ENCODE measurements at regions of chr10 and their contacts with region 1.

Region 1: GRCh38 chr10:70903262-70903921 is 15.0 kb upstream of the PCBD1 start:
- DNase-seq: peak in 1 of 2 experiments; percentile 93
- H3K4me3 ChIP-seq: no peak overlapping the region
- H3K27ac ChIP-seq: no peak overlapping the region
- H3K4me1 ChIP-seq: no peaks in the 10 kb centered on the region; a peak in 1 of 7 replicates
- H3K27me3 ChIP-seq: no peaks in the 10 kb centered on the region
- CTCF ChIP-seq: peak; percentile 92 to 99 (median 97)
- EP300 ChIP-seq: no peak
- POLR2A ChIP-seq: no peak
- RAD21 ChIP-seq: peak; percentile 96 to 99

Region 2: GRCh38 chr10:70699659-70700174 is 203.7 kb before region 1 on chr10:
- CTCF ChIA-PET with region 1: no interaction called
- POLR2A ChIA-PET with region 1: no interaction called
- DNase-seq: no peak
- H3K4me3 ChIP-seq: no peak overlapping the region
- H3K27ac ChIP-seq: no peak overlapping the region
- H3K4me1 ChIP-seq: peaks cover 0 to 4% (median 0%) of the 10 kb centered on the region in 4 experiments; a peak in 1 of 7 replicates
- H3K27me3 ChIP-seq: no peaks in the 10 kb centered on the region
- CTCF ChIP-seq: no peak
- EP300 ChIP-seq: no peak
- POLR2A ChIP-seq: no peak
- RAD21 ChIP-seq: no peak

Region 3: GRCh38 chr10:70742537-70743429 is 160.6 kb before region 1 on chr10:
- CTCF ChIA-PET with region 1: no interaction called
- POLR2A ChIA-PET with region 1: no interaction called
- DNase-seq: no peak
- H3K4me3 ChIP-seq: no peak overlapping the region
- H3K27ac ChIP-seq: no peak overlapping the region
- H3K4me1 ChIP-seq: peaks cover 0 to 4% (median 0%) of the 10 kb centered on the region in 4 experiments; a peak in 1 of 7 replicates
- H3K27me3 ChIP-seq: no peaks in the 10 kb centered on the region
- CTCF ChIP-seq: no peak
- EP300 ChIP-seq: no peak
- POLR2A ChIP-seq: no peak
- RAD21 ChIP-seq: no peak

Region 4: DNA sequence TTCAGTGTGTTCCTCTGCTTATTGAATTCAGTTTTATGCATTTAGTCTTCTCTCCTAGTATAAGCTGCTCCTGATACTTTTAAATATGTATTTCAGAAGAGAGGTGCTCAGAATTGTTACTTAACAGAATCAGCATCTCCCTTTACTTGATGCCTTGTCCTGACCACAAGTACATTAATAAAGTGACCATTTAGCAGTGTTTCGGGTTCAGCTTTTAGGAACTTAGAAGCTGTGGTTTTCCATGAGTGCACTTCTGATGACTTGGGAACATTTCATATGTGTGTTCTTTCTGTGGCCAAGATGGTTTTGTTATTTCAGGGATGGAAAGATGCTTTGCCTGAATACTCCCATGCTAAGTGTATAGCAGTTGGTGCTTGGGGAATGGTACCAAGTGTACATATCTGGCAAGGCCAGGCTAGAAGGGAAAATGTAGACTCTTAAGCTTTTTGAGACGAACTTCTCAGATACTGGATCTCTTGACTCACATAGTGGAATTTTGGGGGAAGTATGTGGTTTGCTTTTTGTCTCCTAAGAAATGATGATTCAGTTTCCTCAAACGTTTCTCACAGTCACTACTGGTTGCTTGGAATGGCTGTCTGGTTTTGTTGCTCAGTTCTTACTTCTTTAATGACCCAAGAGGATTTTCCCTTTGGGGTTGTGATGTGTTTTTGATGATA is 70.4 kb before region 1 on chr10:
- CTCF ChIA-PET with region 1: no interaction called
- POLR2A ChIA-PET with region 1: no interaction called
- DNase-seq: no peak
- H3K4me3 ChIP-seq: no peak overlapping the region
- H3K27ac ChIP-seq: no peak overlapping the region
- H3K4me1 ChIP-seq: no peaks in the 10 kb centered on the region
- H3K27me3 ChIP-seq: no peaks in the 10 kb centered on the region
- CTCF ChIP-seq: no peak
- EP300 ChIP-seq: no peak
- POLR2A ChIP-seq: no peak
- RAD21 ChIP-seq: no peak

Region 5: GRCh38 chr10:70887804-70888800 is 15.3 kb before region 1 on chr10 and contains the start of gene PCBD1:
- CTCF ChIA-PET with region 1: interaction called, 24 read pairs
- POLR2A ChIA-PET with region 1: interaction called, 4 read pairs
- DNase-seq: peak in 1 of 2 experiments; percentile 81
- H3K4me3 ChIP-seq: peak within 1 kb of the TSS; percentile 55 to 72 (median 64)
- H3K27ac ChIP-seq: no peak within 1 kb of the TSS
- H3K4me1 ChIP-seq: peaks cover 7 to 22% (median 18%) of the 10 kb centered on the region in 4 experiments; a peak in 6 of 7 replicates
- H3K27me3 ChIP-seq: no peaks in the 10 kb centered on the region; a peak in 1 of 7 replicates
- CTCF ChIP-seq: no peak
- EP300 ChIP-seq: no peak
- POLR2A ChIP-seq: no peak
- RAD21 ChIP-seq: no peak
- total RNA-seq, gene PCBD1: 46.5 and 46.9 TPM in 2 replicates

Region 6: GRCh38 chr10:70956029-70956759 is 52.8 kb after region 1 on chr10:
- CTCF ChIA-PET with region 1: interaction called, 10 read pairs
- POLR2A ChIA-PET with region 1: no interaction called
- DNase-seq: no peak
- H3K4me3 ChIP-seq: no peak overlapping the region
- H3K27ac ChIP-seq: no peak overlapping the region
- H3K4me1 ChIP-seq: no peaks in the 10 kb centered on the region
- H3K27me3 ChIP-seq: no peaks in the 10 kb centered on the region; a peak in 1 of 7 replicates
- CTCF ChIP-seq: peak; percentile 59 to 82 (median 74)
- EP300 ChIP-seq: no peak
- POLR2A ChIP-seq: no peak
- RAD21 ChIP-seq: peak; percentile 69 to 77

Region 7: GRCh38 chr10:71033396-71033980 is 130.1 kb after region 1 on chr10:
- CTCF ChIA-PET with region 1: interaction called, 17 read pairs
- POLR2A ChIA-PET with region 1: no interaction called
- DNase-seq: no peak
- H3K4me3 ChIP-seq: no peak overlapping the region
- H3K27ac ChIP-seq: no peak overlapping the region
- H3K4me1 ChIP-seq: peaks cover 0 to 2% (median 0%) of the 10 kb centered on the region in 4 experiments; a peak in 1 of 7 replicates
- H3K27me3 ChIP-seq: no peaks in the 10 kb centered on the region; a peak in 1 of 7 replicates
- CTCF ChIP-seq: peak; percentile 28 to 61 (median 33)
- EP300 ChIP-seq: no peak
- POLR2A ChIP-seq: no peak
- RAD21 ChIP-seq: peak in 1 of 2 experiments; percentile 42; a peak in 2 of 4 replicates

Region 8: DNA sequence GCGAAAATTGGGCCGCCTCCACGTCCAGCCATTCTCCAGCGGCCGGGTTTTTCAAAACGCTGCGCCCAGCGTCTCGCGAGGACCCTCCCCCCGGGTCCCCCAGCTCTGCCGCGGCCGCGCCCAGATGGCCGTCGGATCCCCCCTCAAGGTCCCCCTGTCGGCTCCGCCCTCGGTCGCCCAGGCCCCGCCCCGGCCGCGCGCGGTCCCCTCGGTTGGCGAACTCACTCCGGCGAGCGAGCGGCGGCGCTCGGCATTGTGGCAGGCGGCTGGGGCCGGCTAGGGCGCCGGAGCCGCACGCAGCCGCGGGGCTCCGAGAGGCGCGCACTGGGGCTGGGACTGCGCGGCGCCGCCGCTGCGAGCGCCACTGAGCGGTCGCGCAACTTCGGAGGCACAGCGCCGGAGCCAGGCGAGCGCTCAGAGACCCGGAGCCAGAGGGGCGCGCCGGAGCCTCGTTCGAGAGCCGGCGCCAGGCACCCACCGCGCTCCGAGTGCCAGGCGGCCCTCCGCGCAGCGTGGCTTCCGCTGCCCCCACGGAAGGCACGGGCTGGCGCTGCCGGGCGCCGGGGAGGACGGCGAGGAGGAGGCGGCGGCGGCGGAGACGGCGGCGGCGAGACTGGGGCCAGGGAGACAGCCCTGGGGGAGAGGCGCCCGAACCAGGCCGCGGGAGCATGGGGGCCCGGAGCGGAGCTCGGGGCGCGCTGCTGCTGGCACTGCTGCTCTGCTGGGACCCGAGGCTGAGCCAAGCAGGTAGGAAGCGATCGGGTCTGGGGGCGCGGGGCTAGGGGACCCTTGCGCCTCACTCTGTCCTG is 309.1 kb after region 1 on chr10 and contains the start of gene UNC5B:
- CTCF ChIA-PET with region 1: interaction called, 12 read pairs
- POLR2A ChIA-PET with region 1: no interaction called
- DNase-seq: peak; percentile 50 to 96
- H3K4me3 ChIP-seq: peak within 1 kb of the TSS; percentile 65 to 91 (median 78)
- H3K27ac ChIP-seq: no peak within 1 kb of the TSS
- H3K4me1 ChIP-seq: peaks cover 22 to 51% (median 27%) of the 10 kb centered on the region in 4 experiments
- H3K27me3 ChIP-seq: peaks cover 1 to 31% (median 23%) of the 10 kb centered on the region in 4 experiments
- CTCF ChIP-seq: peak; percentile 51 to 64 (median 58)
- EP300 ChIP-seq: no peak
- POLR2A ChIP-seq: peak in 1 of 2 experiments; percentile 60; a peak in 1 of 3 replicates
- RAD21 ChIP-seq: peak; percentile 6 to 40; a peak in 3 of 4 replicates
- total RNA-seq, gene UNC5B: 31.8 and 31.9 TPM in 2 replicates

Region 9: GRCh38 chr10:71285180-71285545 is 381.8 kb after region 1 on chr10:
- CTCF ChIA-PET with region 1: interaction called, 48 read pairs
- POLR2A ChIA-PET with region 1: no interaction called
- DNase-seq: peak in 1 of 2 experiments; percentile 85
- H3K4me3 ChIP-seq: no peak overlapping the region
- H3K27ac ChIP-seq: no peak overlapping the region
- H3K4me1 ChIP-seq: no peaks in the 10 kb centered on the region
- H3K27me3 ChIP-seq: no peaks in the 10 kb centered on the region
- CTCF ChIP-seq: peak; percentile 80 to 85 (median 85)
- EP300 ChIP-seq: no peak
- POLR2A ChIP-seq: no peak
- RAD21 ChIP-seq: peak; percentile 91

Measured in H1 (cell line).